Panc1 (cell line): ENCODE measurements at regions of chr10 and their contacts with region 1.

Region 1: GRCh38 chr10:101736666-101737065 is 39.2 kb downstream of the FGF8 start:
- DNase-seq: no peak
- ATAC-seq: no peak
- H3K4me3 ChIP-seq: no peak overlapping the region
- H3K27ac ChIP-seq: no peak overlapping the region
- H3K4me1 ChIP-seq: no peaks in the 10 kb centered on the region
- H3K27me3 ChIP-seq: peaks cover 3% of the 10 kb centered on the region; the same call in 1 of the 2 replicates
- CTCF ChIP-seq: no peak

Region 2: DNA sequence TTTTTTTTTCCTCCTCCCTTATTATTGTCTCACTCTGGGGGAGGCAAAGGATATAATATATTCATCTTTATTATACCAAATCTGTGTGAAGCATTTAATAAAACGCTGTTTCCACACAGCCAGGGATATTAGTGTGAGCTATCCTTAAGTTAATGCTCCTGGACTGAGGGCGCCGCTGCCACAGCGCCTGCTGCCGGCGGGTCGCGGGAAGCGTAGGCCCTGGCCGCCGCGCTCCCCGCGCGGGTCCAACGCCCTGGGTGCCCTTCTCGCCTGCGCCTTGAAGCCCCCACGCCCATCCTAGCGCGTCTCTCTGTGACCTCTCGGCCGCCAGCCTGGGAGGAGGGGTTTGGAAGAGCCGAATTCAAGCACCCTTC is 497.9 kb before region 1 on chr10:
- CTCF ChIA-PET with region 1: no interaction called
- POLR2A ChIA-PET with region 1: interaction called, 24 read pairs
- in situ Hi-C with region 1: no loop called
- intact Hi-C with region 1: no loop called
- DNase-seq: no peak
- ATAC-seq: peak; percentile 87
- H3K4me3 ChIP-seq: peak overlapping the region in 1 of 2 experiments; percentile 11; a peak in 1 of 4 replicates
- H3K27ac ChIP-seq: no peak overlapping the region
- H3K4me1 ChIP-seq: no peaks in the 10 kb centered on the region
- H3K27me3 ChIP-seq: no peaks in the 10 kb centered on the region; the same call in 1 of the 2 replicates
- CTCF ChIP-seq: peak; percentile 98

Region 3: DNA sequence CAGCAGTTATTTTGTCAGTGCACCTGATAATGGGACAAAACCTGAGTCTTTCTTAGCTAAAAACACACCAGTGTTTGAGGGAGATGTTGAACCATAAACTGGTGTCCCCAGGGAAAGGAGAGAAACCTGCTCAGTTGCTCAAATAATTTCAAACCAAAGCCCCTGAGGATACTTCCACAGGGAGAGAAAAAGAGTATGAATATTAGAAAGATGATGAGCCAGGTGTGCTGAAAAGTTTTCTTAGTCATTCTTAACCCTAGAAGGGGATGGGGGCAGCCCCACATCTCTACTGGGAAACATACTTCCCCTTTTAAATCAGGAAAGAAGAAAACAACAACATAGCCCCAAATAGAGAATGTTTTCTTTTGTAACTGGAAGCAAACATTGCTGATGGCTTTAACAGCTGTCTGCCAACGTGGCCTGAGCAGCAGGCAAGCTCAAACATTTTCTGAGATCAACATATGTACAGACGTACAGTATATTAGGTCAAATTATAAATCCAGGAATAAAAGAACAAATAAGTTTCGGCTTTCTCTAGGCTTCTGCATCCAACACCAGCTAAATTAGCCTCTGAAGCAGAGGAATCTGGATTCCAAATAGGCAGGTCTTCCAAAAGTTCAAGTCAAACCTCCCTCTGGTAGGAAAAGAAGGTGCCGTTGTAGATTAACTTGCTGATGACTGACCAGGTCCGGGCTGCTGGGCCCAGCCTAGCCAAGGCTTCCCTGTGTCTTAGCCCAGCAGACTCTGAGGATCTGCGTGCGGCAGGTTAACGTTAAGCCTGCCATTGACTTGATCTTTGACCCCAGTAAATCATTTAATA is 11.2 kb before region 1 on chr10:
- CTCF ChIA-PET with region 1: no interaction called
- POLR2A ChIA-PET with region 1: no interaction called
- in situ Hi-C with region 1: no loop called
- intact Hi-C with region 1: no loop called
- DNase-seq: no peak
- ATAC-seq: no peak
- H3K4me3 ChIP-seq: no peak overlapping the region
- H3K27ac ChIP-seq: no peak overlapping the region
- H3K4me1 ChIP-seq: no peaks in the 10 kb centered on the region
- H3K27me3 ChIP-seq: no peaks in the 10 kb centered on the region
- CTCF ChIP-seq: no peak